Activated T-helper 2 cell treated with anti-CD3 and anti-CD28 coated beads, Interferon-gamma antibody, Interleukin-2, Interleukin-4, amounts not matched to agents 10 μg/mL and 5 μg/mL and 100 μg/mL, durations not matched to agents 14 hours and 24 hours and 36 hours (primary cell): ENCODE measurements at regions of chr11 and their contacts with region 1.

Region 1: DNA sequence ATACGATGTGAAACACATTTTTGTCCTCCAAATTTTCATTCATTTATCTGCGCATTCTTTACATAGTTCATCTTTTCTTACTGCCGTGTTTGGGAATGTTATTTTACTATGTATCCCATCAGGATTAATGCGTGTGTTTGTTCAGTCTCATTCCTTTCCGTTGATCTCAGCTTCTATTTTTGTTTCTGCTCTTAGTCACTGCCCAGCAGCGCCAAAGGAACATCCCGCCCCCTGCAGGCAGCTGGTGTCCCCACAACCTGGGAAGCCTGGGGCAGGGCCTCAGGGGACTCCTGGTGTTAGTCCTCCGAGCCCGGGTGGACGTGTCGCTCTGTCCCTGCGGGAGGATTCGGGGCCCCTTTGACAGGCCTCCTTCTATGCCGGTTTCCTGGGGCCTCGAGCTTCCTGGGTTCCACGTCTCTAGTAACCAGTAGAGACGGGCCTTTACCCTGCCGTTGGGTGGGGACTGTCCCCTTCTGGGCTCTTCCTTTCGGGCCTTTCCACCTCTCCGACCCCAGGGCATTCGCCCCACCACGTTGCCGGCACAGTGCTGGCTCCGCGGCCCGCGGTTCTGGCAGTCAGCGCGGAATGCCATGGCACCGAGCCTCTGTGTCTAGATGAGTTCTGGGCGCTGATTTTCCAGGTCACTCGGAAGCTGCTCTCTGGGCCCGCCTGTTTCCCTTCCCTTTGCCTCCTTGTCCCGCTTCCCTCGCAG is 39.8 kb downstream of the WEE1 start:
- DNase-seq: peak; percentile 81
- H3K4me3 Mint-ChIP-seq: peak overlapping the region; percentile 72
- H3K27ac Mint-ChIP-seq: peak overlapping the region; percentile 98
- H3K4me1 Mint-ChIP-seq: peaks cover 42% of the 10 kb centered on the region
- H3K27me3 Mint-ChIP-seq: no peaks in the 10 kb centered on the region

Region 2: DNA sequence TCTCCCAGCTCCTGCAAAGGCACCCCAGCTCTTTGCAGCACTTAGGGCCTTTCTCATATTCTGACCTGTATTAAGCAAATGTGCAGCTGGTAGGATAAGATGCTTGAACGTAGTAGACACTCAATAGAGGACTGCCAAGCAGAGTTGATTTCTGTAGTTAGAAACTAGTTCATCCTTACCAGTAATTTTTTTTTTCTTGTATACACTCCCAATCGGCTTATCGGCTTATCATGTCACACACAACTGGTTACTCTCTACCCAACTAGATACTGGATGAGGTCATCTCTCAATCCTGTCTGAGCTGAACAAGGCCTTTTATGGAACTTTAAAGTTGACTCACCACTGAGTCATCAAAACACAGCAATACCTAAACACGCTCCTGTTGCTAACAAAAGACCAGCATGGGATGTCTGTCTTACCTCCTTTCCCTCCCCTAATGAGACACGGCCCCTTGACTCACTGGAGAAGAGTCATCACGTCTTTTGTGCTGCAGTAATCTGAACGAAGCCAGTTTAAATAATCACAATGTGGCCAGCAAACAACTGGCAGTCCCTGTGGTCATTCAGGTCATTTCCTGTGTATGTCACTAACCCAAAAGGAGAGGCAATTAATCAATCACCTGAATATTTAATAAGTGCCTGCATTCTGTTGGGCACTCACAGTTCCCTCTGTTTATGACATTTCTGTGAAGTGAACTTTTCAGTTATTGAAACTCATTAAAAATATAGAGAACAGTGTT is 47.3 kb before region 1 on chr11:
- intact Hi-C with region 1: loop called (anchors 2 kb)
- DNase-seq: peak; percentile 61
- H3K4me3 Mint-ChIP-seq: peak overlapping the region; percentile 37
- H3K27ac Mint-ChIP-seq: peak overlapping the region; percentile 89
- H3K4me1 Mint-ChIP-seq: peaks cover 26% of the 10 kb centered on the region
- H3K27me3 Mint-ChIP-seq: peaks cover 2% of the 10 kb centered on the region

Region 3: DNA sequence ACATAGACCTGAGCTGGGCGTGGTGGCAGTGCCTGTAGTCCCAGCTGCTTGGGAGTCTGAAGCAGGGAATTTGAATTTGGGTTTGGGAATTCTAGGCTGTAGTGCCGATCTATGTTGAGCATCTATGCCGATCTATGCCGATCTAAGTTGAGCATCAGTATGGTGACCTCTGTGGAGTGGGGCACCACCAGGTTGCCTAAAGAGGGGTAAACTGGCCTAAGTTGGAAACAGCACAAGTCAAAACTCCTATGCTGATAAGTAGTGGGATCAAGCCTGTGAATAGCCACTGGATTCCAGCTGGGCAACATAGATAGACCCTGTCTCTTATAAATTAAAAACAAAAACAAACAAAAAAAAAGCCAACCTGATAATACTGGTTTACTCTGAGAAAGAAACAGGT is 32.4 kb before region 1 on chr11:
- intact Hi-C with region 1: no loop called
- DNase-seq: no peak
- H3K4me3 Mint-ChIP-seq: no peak overlapping the region
- H3K27ac Mint-ChIP-seq: no peak overlapping the region
- H3K4me1 Mint-ChIP-seq: peaks cover 43% of the 10 kb centered on the region
- H3K27me3 Mint-ChIP-seq: no peaks in the 10 kb centered on the region

Region 4: GRCh38 chr11:9601037-9601875 is 12.0 kb before region 1 on chr11:
- intact Hi-C with region 1: loop called (anchors 1 kb)
- DNase-seq: peak; percentile 72
- H3K4me3 Mint-ChIP-seq: peak overlapping the region; percentile 77
- H3K27ac Mint-ChIP-seq: peak overlapping the region; percentile 89
- H3K4me1 Mint-ChIP-seq: peaks cover 34% of the 10 kb centered on the region
- H3K27me3 Mint-ChIP-seq: no peaks in the 10 kb centered on the region

Region 5: GRCh38 chr11:9748361-9748970 is 135.2 kb after region 1 on chr11:
- intact Hi-C with region 1: loop called (anchors 1 kb)
- DNase-seq: peak; percentile 63
- H3K4me3 Mint-ChIP-seq: no peak overlapping the region
- H3K27ac Mint-ChIP-seq: no peak overlapping the region
- H3K4me1 Mint-ChIP-seq: peaks cover 18% of the 10 kb centered on the region
- H3K27me3 Mint-ChIP-seq: no peaks in the 10 kb centered on the region